Posterior cingulate gyrus (tissue), 11 donors: ENCODE measurements at regions of chr1 and their contacts with region 1.

Region 1: DNA sequence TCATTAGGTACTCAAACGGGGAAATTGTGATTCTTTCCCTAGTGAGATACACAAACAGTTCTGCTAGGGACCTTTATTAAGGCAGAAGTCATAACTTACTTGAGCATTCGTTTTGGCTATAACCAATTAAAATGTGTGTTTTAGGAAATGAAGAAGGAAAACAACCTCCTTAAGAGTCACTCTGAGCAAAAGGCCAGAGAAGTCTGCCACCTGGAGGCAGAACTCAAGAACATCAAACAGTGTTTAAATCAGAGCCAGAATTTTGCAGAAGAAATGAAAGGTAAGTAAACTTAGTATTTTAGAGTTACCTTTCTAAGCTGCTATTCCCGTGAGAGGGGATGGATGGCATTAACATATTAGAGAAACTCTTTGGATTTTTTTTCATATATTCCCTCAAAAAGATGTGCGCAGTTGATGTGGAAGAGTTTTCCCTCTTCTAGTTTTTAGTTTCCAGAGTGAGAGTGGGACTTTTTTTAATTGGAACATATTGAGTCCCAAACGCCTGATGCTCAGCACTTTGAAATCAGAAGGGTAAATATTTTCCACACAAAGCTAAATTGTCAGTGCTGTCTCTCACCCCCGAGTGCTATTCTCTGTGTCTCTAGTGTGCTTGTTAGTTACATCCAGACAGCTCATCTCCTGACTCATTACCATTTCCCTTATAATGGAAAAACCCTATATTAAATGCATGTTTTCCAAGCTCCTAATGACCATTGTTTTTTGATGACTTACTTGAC is 34.9 kb downstream of the CENPF start:
- DNase-seq: peak in 4 of 10 donors; percentile 8 to 23 (median 13)

Region 2: GRCh38 chr1:214213136-214213535 is 424.8 kb before region 1 on chr1:
- intact Hi-C with region 1: loop called (anchors 5 kb)
- DNase-seq: no peak